Activated CD4-positive, alpha-beta T cell treated with anti-CD3 and anti-CD28 coated beads, Interleukin-2, amount 10 ng/mL, durations not matched to agents 24 days and 14 days (primary cell): ENCODE measurements at regions of chr3 and their contacts with region 1.

Region 1: DNA sequence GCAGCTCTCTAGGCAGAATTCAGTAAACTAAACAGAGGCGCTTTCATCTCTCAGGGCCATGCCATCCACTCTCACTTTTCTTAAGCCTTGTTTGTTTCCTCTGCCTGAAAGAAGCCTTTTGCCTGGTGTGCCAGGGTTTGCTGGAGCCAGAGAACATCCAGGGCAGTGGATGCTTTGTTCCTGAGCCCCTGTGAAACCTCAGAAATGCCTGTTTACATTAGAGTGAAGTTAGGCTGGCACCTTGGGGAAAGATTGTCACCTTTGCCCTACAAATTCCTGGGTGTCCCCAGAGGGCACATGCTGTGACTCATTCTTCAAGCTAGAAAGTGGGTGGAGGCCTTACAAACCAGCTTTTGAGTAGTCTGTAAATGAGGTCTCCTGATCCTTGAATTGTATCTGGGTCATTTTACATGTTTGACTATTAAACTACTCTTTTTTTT is 10.7 kb upstream of the TRAK1 start:
- DNase-seq: no peak
- H3K4me3 Mint-ChIP-seq: peak overlapping the region; percentile 26
- H3K27ac Mint-ChIP-seq: peak overlapping the region; percentile 84
- H3K4me1 Mint-ChIP-seq: peaks cover 37% of the 10 kb centered on the region
- H3K27me3 Mint-ChIP-seq: no peaks in the 10 kb centered on the region

Region 2: DNA sequence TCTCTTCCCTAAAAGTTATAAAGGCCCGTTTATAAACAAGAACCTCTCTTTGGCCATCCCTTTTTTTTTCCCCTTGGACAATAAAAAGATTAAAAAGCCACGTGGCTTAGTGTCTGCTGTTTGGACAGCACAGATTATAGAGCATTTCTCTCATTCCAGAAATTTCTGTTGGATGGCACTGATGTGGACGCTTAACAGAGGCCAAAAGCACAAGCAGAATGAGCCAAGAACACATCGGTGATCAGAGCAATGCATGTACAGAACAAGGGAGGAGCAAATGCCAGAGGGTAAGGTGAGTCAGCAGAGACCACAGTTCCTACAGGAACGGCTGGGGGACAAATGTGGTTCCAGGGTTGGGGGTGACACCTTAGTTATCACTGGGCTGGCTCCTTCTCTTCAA is 911.4 kb before region 1 on chr3:
- intact Hi-C with region 1: no loop called
- DNase-seq: no peak
- H3K4me3 Mint-ChIP-seq: no peak overlapping the region
- H3K27ac Mint-ChIP-seq: no peak overlapping the region
- H3K4me1 Mint-ChIP-seq: peaks cover 11% of the 10 kb centered on the region
- H3K27me3 Mint-ChIP-seq: peaks cover 15% of the 10 kb centered on the region

Region 3: DNA sequence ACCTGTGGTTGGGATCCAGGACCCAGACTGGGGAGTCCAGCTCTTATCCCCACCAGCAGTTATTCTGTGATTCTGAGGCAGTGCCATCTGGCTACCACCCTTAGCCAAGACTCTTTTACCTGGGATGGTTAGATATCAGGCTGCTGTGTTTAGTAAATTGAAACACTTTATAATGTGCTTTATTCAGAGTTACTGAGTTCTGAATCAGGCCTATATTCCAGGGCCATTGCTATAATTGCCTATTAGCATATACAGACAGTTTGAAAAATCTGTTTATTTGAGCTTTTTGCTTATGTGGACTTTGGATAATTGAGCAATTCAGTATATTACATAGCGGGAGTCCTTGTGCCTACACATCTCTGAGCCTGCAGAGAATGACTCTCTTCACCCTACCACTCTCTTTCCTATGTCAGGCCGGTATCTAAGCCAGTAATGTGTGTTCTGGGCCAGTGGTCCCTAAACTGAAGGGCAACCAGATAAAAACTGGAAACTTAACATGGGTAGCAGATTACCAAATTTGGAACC is 34.7 kb before region 1 on chr3:
- intact Hi-C with region 1: loop called (anchors 5 kb)
- DNase-seq: no peak
- H3K4me3 Mint-ChIP-seq: no peak overlapping the region
- H3K27ac Mint-ChIP-seq: no peak overlapping the region
- H3K4me1 Mint-ChIP-seq: peaks cover 22% of the 10 kb centered on the region
- H3K27me3 Mint-ChIP-seq: no peaks in the 10 kb centered on the region